Ascending aorta (tissue), 2 donors: ENCODE measurements at regions of chr3 and their contacts with region 1.

Region 1: GRCh38 chr3:15797642-15798303 is at the start of gene ANKRD28:
- DNase-seq: no peak
- H3K4me3 ChIP-seq: peak within 1 kb of the TSS; percentile 43 to 54
- H3K27ac ChIP-seq: peak within 1 kb of the TSS; percentile 73 to 76
- H3K4me1 ChIP-seq: peaks cover 6 to 7% of the 10 kb centered on the region in 2 donors
- H3K27me3 ChIP-seq: no peaks in the 10 kb centered on the region
- CTCF ChIP-seq: peak in 2 of 3 experiments; percentile 31 to 34
- total RNA-seq, gene ANKRD28: 19.7 TPM

Region 2: GRCh38 chr3:15768421-15769255 is 29.1 kb before region 1 on chr3:
- intact Hi-C with region 1: loop called (anchors 2 kb)
- DNase-seq: no peak
- H3K4me3 ChIP-seq: no peak overlapping the region
- H3K27ac ChIP-seq: peak overlapping the region; percentile 28 to 47
- H3K4me1 ChIP-seq: peaks cover 0 to 13% of the 10 kb centered on the region in 2 donors
- H3K27me3 ChIP-seq: no peaks in the 10 kb centered on the region
- CTCF ChIP-seq: no peak

Region 3: DNA sequence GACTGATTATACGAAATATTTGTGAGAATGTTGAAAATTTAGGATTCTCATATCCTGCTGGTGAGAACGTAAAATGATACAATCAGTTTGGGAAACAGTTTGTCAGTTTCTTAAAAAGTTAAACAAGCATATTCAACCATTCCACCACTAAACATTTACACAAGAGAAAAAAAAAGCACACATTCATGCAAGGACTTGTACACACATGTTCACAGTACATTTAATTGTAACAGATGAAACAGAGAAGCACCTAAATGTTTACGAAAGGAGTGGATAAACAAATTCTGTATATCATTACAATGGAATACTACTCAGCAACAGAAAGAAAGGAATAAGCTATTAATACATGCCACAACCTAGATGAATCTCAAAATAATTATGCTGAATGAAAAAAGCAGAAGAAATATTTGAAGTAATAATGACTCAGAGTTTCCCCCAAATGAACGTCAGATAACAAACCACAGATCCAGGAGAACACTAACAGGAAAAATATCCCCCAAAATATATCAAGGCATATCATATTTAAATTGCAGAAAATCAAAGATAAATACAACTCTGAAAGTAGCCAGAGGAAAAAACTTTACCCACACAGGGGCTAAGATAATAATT is 14.3 kb before region 1 on chr3:
- intact Hi-C with region 1: no loop called
- DNase-seq: no peak
- H3K4me3 ChIP-seq: no peak overlapping the region
- H3K27ac ChIP-seq: no peak overlapping the region
- H3K4me1 ChIP-seq: peaks cover 0 to 5% of the 10 kb centered on the region in 2 donors
- H3K27me3 ChIP-seq: no peaks in the 10 kb centered on the region
- CTCF ChIP-seq: no peak

Region 4: GRCh38 chr3:15831930-15832329 is 34.2 kb after region 1 on chr3:
- intact Hi-C with region 1: no loop called
- DNase-seq: no peak
- H3K4me3 ChIP-seq: no peak overlapping the region
- H3K27ac ChIP-seq: no peak overlapping the region
- H3K4me1 ChIP-seq: peaks cover 0 to 5% of the 10 kb centered on the region in 2 donors
- H3K27me3 ChIP-seq: no peaks in the 10 kb centered on the region
- CTCF ChIP-seq: no peak